HCT116 (cell line): ENCODE measurements at regions of chr9 and their contacts with region 1.

Region 1: DNA sequence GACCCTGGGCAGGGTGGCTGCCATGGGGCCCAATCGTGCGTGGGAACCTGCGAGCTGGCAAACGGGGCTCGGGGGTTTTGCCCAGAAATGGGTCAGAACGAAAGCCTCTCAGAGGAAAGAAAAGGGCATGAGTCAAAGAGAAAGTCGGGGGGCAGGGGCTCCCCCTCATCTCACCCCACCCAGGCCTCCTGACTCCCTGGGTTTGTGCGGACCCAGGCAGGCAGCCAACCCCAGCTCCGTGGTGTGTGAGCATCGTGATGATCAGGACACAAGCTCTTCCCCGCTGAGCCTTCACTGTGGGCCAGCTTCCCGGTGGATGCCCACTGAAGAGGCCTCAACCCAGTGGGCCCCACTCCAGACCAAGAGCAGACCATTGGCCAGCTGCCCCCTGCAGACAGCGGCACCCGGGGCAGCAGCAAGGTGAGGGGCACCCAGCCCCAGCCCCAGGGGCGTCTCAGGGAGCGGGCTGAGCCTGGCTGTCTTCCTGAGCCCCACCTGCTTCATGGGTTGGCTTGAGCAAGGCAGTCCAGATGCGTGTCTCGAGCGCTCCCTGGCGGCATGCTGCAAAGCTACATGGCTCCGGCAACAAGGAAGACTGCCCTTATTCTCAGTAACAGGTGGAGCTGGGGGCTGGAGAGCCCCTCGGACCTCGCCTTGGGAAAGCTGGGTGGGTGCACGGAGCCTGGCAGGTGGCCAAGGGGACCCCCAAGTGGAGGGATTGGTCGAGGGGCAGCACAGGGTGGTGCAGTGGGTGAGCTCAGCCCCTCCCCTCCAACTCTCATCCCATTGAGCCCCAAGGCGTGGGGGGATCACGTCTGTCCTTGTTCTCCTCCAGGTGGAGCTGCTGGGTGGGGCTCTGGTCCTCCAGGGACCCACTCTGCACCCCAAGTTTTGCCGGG is 3.2 kb upstream of the FUT7 start:
- DNase-seq: peak; percentile 69
- ATAC-seq: peak; percentile 95
- H3K4me3 ChIP-seq: peak overlapping the region in 1 of 2 experiments; percentile 22; a peak in 1 of 4 replicates
- H3K27ac ChIP-seq: no peak overlapping the region; the same call in 1 of the 2 replicates
- H3K4me1 ChIP-seq: peaks cover 9 to 20% of the 10 kb centered on the region in 2 experiments; a peak in 3 of 4 replicates
- H3K27me3 ChIP-seq: no peaks in the 10 kb centered on the region
- CTCF ChIP-seq: peak in 2 of 3 experiments; percentile 85 to 96; a peak in 4 of 6 replicates
- POLR2A ChIP-seq: no peak
- RAD21 ChIP-seq: no peak

Region 2: DNA sequence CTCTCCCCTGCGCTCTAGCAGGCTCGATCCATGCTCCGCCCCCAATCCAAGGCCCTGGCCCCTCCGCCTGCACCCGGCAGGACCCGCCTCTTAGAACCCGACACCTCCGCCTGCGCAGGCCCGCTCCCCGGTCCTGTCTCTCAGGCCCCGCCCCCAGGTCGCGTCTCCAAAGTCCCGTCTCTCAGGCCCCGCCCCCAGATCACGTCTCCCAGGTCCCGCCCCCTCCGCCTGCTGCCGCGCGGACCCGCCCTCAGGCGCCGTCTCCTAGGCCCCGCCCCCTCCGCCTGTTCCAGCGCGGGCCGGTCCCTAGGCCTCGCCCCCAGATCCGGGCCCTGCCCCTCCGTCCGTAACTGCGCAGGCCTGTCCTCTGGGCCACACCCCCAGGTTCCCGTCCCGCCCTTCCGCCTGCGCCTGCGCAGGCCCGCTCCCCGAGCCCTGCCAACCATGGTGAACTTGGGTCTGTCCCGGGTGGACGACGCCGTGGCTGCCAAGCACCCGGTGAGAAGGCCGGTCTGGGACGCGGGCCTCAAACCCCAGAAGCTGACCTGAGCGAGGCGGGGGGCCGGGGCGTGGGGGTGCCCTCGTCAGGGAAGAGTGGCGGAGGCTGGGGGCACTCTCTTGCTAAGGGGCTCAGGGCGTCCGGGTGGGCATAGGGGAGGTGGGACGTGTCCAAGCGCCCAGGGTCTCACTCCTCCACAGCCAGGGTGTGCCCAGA is 244.0 kb before region 1 on chr9 and contains the start of gene TMEM141:
- CTCF ChIA-PET with region 1: interaction called, 11 read pairs
- POLR2A ChIA-PET with region 1: no interaction called
- RAD21 ChIA-PET with region 1: no interaction called
- intact Hi-C with region 1: loop called (anchors 1 kb)
- DNase-seq: peak; percentile 98
- ATAC-seq: peak; percentile 88
- H3K4me3 ChIP-seq: peak within 1 kb of the TSS; percentile 83 to 84
- H3K27ac ChIP-seq: peak within 1 kb of the TSS; percentile 79
- H3K4me1 ChIP-seq: peaks cover 14 to 40% of the 10 kb centered on the region in 2 experiments; a peak in 3 of 4 replicates
- H3K27me3 ChIP-seq: no peaks in the 10 kb centered on the region
- CTCF ChIP-seq: no peak
- POLR2A ChIP-seq: peak; percentile 46
- RAD21 ChIP-seq: no peak
- total RNA-seq, gene TMEM141: 73.6 TPM

Region 3: GRCh38 chr9:136840140-136840687 is 194.9 kb before region 1 on chr9:
- CTCF ChIA-PET with region 1: interaction called, 12 read pairs
- POLR2A ChIA-PET with region 1: no interaction called
- RAD21 ChIA-PET with region 1: no interaction called
- intact Hi-C with region 1: loop called (anchors 5 kb)
- DNase-seq: no peak
- ATAC-seq: no peak
- H3K4me3 ChIP-seq: no peak overlapping the region
- H3K27ac ChIP-seq: peak overlapping the region; percentile 70
- H3K4me1 ChIP-seq: peaks cover 29 to 39% of the 10 kb centered on the region in 2 experiments
- H3K27me3 ChIP-seq: no peaks in the 10 kb centered on the region
- CTCF ChIP-seq: no peak
- POLR2A ChIP-seq: no peak
- RAD21 ChIP-seq: no peak

Region 4: GRCh38 chr9:136949817-136950655 is 85.1 kb before region 1 on chr9:
- CTCF ChIA-PET with region 1: interaction called, 109 read pairs
- POLR2A ChIA-PET with region 1: interaction called, 9 read pairs
- RAD21 ChIA-PET with region 1: interaction called, 21 to 25 read pairs
- intact Hi-C with region 1: loop called (anchors 1 kb)
- DNase-seq: peak; percentile 85
- ATAC-seq: peak; percentile 87
- H3K4me3 ChIP-seq: peak overlapping the region; percentile 65 to 67
- H3K27ac ChIP-seq: peak overlapping the region; percentile 94
- H3K4me1 ChIP-seq: peaks cover 22 to 43% of the 10 kb centered on the region in 2 experiments
- H3K27me3 ChIP-seq: no peaks in the 10 kb centered on the region
- CTCF ChIP-seq: peak in 2 of 3 experiments; percentile 12 to 22; a peak in 2 of 6 replicates
- POLR2A ChIP-seq: peak; percentile 60
- RAD21 ChIP-seq: no peak

Region 5: GRCh38 chr9:137021979-137022619 is 13.0 kb before region 1 on chr9:
- CTCF ChIA-PET with region 1: interaction called, 14 read pairs
- POLR2A ChIA-PET with region 1: no interaction called
- RAD21 ChIA-PET with region 1: no interaction called
- intact Hi-C with region 1: no loop called
- DNase-seq: peak; percentile 92
- ATAC-seq: peak; percentile 97
- H3K4me3 ChIP-seq: no peak overlapping the region
- H3K27ac ChIP-seq: peak overlapping the region; percentile 63
- H3K4me1 ChIP-seq: peaks cover 27 to 36% of the 10 kb centered on the region in 2 experiments; a peak in 3 of 4 replicates
- H3K27me3 ChIP-seq: no peaks in the 10 kb centered on the region
- CTCF ChIP-seq: no peak
- POLR2A ChIP-seq: no peak
- RAD21 ChIP-seq: no peak